ENCODE measurements at regions of chr7 and their contacts with region 1.

Region 1: DNA sequence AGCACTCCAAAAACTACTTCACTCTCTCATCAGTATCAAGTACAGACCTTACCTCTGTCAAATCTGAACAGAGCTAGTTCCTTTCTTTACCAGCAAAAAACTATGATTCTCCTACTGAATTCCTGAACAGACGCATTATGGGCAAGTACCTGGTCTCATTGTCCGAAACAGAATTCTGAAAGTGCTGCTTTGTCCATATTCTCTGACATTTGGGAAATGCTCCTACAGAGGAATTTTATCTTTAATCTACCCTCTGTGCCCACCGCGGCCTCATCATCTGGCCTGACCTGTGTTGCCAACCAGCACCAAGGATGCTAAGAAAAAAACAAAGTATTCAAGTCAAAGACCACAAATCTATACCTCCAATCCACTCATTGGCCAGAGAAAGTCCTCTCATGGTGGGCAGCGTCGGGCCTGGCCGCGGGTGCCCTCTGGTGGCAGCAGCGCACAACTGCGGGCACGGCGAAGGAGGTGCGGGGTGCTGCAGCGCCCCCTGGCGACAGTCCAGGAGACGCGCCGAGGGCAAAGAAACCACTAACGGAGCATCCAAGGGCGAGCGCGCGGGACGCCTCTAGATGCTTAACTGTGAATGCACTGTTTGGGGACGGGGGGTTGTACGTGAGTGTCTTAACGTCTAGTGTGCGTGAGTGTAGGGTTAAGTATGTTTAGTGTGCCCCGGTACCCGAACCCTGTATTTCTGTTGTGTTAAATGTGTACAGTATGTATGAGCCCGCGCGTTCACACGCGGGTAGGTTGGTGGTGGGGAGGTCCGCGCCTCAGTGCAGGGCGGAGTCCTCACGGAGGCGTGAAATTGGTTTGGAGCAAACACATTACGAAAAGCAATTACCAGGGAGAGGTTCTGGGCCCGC is 5.0 kb upstream of the GBX1 start:
- DNase-seq: peak; percentile 90
- H3K4me3 ChIP-seq: no peak overlapping the region
- H3K27ac ChIP-seq: no peak overlapping the region
- H3K4me1 ChIP-seq: peaks cover 0 to 13% (median 8%) of the 10 kb centered on the region in 4 donors
- H3K27me3 ChIP-seq: peaks cover 13 to 60% (median 42%) of the 10 kb centered on the region in 3 donors
- CTCF ChIP-seq: peak; percentile 100
- EP300 ChIP-seq: no peak
- POLR2A ChIP-seq: no peak

Region 2: DNA sequence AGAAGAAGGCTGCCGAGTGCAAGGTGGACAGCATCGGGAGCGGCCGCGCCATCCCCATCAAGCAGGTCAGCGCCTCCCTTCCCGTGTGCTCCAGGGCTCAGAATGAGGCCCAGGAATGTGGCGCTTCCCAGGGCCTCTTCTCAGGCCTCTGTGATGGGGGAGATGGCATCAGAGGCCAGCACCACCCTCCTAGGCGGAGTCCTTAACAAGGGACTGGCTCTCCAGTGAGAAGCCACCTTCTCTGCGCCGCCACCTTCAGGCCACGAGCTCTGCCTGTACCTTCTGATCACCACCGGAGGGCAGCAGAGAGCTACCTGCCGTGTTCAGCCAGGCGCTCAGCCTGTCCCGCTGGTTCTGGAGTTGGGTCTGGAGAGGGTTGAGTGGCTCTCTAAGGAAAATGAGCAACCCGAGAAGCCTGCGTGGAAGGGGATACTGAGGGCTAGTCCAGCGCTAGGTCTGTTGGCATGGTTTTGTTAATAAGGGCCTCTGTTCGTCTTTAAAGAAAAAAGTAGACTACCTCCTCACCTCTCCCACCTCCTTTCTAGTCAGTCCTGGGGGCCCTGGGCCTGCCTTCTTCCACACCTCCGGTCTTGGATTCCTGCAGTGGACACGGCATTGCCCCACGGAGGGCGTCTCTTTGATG is 48.6 kb before region 1 on chr7:
- intact Hi-C with region 1: loop called (anchors 1 kb)
- DNase-seq: peak; percentile 91
- H3K4me3 ChIP-seq: no peak overlapping the region
- H3K27ac ChIP-seq: no peak overlapping the region
- H3K4me1 ChIP-seq: peaks cover 0 to 26% (median 15%) of the 10 kb centered on the region in 4 donors
- H3K27me3 ChIP-seq: no peaks in the 10 kb centered on the region
- CTCF ChIP-seq: peak; percentile 93 to 98 (median 96)
- EP300 ChIP-seq: no peak
- POLR2A ChIP-seq: no peak